Heart left ventricle (tissue), 16 donors: ENCODE measurements at regions of chr6 and their contacts with region 1.

Region 1: DNA sequence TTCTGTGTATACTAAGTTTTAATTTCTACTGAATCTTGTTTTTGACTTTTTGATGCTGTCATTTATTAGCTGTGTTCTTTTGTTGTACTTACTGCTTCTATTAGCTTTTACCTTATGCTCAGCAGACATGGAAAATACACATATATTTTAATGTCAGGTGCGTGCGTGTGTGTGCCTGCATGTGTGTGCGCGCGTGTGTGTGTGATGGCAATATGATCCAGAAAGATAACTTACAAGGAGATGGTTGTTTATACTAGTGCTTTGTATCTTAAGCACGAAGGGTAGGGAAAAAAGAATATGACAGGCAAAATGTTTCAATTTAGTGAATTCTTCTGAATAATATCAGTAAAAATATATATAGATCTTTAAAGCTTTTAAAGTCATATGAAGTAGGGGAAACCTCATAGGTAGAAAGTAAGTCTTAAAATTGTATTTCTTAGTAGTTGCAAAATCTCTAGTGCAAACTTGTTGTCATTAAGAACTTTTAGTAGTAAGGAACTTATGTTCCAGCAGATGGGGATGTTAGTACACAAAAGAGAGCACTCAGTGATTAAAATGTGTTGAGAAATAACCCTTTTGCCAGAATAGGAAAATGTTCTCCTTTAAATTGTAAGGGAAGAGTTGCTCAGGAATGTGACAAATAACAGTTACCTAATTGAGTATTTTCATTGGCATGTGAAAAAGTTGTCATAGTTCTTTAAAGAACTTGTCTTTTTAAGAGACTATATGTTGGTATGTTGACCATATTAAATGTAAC is 13.2 kb downstream of the QKI start:
- DNase-seq: no peak
- ATAC-seq: peak in 2 of 4 donors; percentile 33 to 43
- H3K4me3 ChIP-seq: peak overlapping the region in 4 of 12 donors; percentile 2 to 10 (median 6)
- H3K27ac ChIP-seq: peak overlapping the region in 7 of 12 donors; percentile 4 to 49 (median 16)
- H3K4me1 ChIP-seq: peaks cover 27 to 100% (median 93%) of the 10 kb centered on the region in 12 donors
- H3K27me3 ChIP-seq: no peaks in the 10 kb centered on the region
- CTCF ChIP-seq: peak; percentile 18 to 64 (median 50)
- POLR2A ChIP-seq: no peak

Region 2: GRCh38 chr6:163565140-163565539 is 137.5 kb after region 1 on chr6:
- intact Hi-C with region 1: loop called in 8 of 10 experiments (anchors 5 to 10 kb)
- DNase-seq: no peak
- ATAC-seq: peak in 3 of 4 donors; percentile 45 to 69 (median 64)
- H3K4me3 ChIP-seq: no peak overlapping the region
- H3K27ac ChIP-seq: peak overlapping the region in 4 of 12 donors; percentile 5 to 21 (median 8)
- H3K4me1 ChIP-seq: peaks cover 0 to 70% (median 37%) of the 10 kb centered on the region in 12 donors
- H3K27me3 ChIP-seq: no peaks in the 10 kb centered on the region
- CTCF ChIP-seq: no peak
- POLR2A ChIP-seq: no peak

Region 3: GRCh38 chr6:163711615-163712565 is 284.2 kb after region 1 on chr6:
- intact Hi-C with region 1: loop called in 3 of 10 experiments (anchors 10 kb)
- DNase-seq: peak; percentile 80 to 91 (median 84)
- ATAC-seq: peak; percentile 71 to 80 (median 77)
- H3K4me3 ChIP-seq: peak overlapping the region in 1 of 12 donors; percentile 12
- H3K27ac ChIP-seq: peak overlapping the region; percentile 67 to 88 (median 78)
- H3K4me1 ChIP-seq: peaks cover 24 to 63% (median 61%) of the 10 kb centered on the region in 12 donors
- H3K27me3 ChIP-seq: no peaks in the 10 kb centered on the region
- CTCF ChIP-seq: peak in 11 of 12 donors; percentile 20 to 59 (median 41)
- POLR2A ChIP-seq: no peak

Region 4: DNA sequence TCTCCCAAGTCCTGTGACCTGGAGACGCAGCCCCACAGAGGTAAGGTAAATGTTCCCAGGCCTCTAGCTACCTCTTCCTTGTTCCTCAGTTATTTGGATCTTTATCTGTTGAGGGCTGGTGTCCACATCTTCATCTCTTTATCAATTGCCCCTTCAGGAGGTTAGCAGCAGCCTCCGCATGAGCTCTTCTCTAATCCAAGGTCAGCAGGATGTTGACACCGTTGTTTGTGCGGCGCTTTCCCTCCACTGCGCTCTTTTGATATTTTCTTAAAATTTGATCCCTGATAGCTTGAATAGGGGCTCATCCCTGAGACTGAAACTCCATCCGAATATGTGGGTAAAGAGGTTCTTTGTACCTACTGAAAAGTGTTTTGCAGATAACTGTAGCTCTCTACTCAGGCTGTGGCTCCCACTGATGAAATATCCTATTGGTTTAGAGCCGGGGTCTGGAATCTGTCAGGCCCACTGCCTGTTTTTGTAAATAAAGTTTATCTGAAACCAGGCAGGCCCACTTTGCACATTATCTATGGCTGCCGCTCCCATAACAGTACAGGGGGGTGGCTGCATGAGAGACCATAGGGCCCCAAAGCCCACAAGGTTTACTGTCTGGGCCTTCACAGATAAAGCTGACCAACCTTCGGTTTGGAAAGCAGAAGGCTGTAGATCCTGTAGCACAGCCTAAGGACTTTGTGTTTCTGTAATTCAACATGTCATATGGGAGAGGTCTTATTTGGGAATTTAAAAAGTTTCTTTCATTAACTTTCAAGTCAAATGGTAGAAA is 349.4 kb after region 1 on chr6:
- intact Hi-C with region 1: loop called in 1 of 10 experiments (anchors 10 kb)
- DNase-seq: no peak
- ATAC-seq: peak in 1 of 4 donors; percentile 19
- H3K4me3 ChIP-seq: no peak overlapping the region
- H3K27ac ChIP-seq: peak overlapping the region in 9 of 12 donors; percentile 11 to 68 (median 62)
- H3K4me1 ChIP-seq: peaks cover 0 to 28% (median 4%) of the 10 kb centered on the region in 12 donors
- H3K27me3 ChIP-seq: no peaks in the 10 kb centered on the region
- CTCF ChIP-seq: no peak
- POLR2A ChIP-seq: no peak

Region 5: GRCh38 chr6:164927288-164928056 is 1499.8 kb after region 1 on chr6:
- intact Hi-C with region 1: loop called in 3 of 10 experiments (anchors 10 kb)
- DNase-seq: peak; percentile 61 to 85 (median 61)
- ATAC-seq: peak; percentile 83 to 96 (median 92)
- H3K4me3 ChIP-seq: peak overlapping the region in 3 of 12 donors; percentile 8 to 28 (median 18)
- H3K27ac ChIP-seq: no peak overlapping the region
- H3K4me1 ChIP-seq: peaks cover 0 to 8% (median 2%) of the 10 kb centered on the region in 12 donors
- H3K27me3 ChIP-seq: no peaks in the 10 kb centered on the region
- CTCF ChIP-seq: peak; percentile 93 to 100 (median 98)
- POLR2A ChIP-seq: no peak